ENCODE measurements at regions of chr11 and their contacts with region 1.

Region 1: DNA sequence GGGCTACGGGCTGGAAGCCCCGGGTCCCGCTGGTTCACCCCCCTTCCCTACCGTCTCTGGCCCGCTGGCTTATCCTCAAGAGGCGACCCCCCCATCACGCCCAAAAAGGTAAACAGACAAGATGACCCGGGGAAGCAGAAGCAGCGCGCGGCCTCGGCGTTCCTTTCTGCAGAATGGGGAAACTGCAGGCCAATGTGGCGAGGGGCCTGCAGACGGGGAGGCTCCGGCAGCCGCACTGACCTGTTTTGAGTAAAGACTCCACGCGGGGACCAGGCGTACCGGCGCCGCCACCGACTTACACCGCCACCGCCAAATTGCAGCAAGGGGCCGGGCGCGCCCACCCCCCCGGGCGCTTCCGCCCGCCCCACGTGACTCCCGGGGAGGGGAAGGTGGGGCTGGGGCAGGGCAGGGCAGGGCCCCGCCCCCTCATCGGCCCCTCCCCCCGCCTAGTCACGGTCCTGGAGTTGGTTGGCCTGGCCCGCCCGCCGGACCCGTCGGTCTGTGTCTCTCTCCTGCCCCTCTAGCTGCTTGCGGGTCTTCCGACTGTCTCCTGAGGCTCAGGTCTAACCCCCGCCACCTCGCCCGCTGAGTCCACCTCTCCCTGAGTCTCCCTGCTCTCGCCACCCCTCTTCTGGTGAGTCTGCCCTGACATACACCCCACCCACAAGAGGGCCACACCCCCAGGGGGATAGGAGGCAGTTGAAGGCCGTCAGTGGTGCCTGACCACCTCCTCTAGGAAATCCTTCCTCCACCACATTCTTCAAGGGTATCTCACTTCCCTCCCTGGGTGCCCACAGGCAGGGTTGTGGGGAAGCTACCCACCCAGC is at the start of gene ARAP1:
- DNase-seq: peak; percentile 80 to 82
- H3K4me3 ChIP-seq: peak within 1 kb of the TSS; percentile 96
- H3K27ac ChIP-seq: peak within 1 kb of the TSS; percentile 35; the same call in 1 of the 2 replicates
- H3K4me1 ChIP-seq: peaks cover 26% of the 10 kb centered on the region
- H3K27me3 ChIP-seq: no peaks in the 10 kb centered on the region
- CTCF ChIP-seq: no peak
- total RNA-seq, gene ARAP1: 151 and 184 TPM in 2 replicates

Region 2: GRCh38 chr11:72786393-72786866 is 34.1 kb after region 1 on chr11:
- CTCF ChIA-PET with region 1: no interaction called
- POLR2A ChIA-PET with region 1: interaction called, 24 read pairs
- intact Hi-C with region 1: no loop called
- DNase-seq: peak; percentile 75 to 99
- H3K4me3 ChIP-seq: no peak overlapping the region; the same call in 1 of the 2 replicates
- H3K27ac ChIP-seq: peak overlapping the region; percentile 80
- H3K4me1 ChIP-seq: peaks cover 80% of the 10 kb centered on the region
- H3K27me3 ChIP-seq: no peaks in the 10 kb centered on the region
- CTCF ChIP-seq: no peak

Region 3: DNA sequence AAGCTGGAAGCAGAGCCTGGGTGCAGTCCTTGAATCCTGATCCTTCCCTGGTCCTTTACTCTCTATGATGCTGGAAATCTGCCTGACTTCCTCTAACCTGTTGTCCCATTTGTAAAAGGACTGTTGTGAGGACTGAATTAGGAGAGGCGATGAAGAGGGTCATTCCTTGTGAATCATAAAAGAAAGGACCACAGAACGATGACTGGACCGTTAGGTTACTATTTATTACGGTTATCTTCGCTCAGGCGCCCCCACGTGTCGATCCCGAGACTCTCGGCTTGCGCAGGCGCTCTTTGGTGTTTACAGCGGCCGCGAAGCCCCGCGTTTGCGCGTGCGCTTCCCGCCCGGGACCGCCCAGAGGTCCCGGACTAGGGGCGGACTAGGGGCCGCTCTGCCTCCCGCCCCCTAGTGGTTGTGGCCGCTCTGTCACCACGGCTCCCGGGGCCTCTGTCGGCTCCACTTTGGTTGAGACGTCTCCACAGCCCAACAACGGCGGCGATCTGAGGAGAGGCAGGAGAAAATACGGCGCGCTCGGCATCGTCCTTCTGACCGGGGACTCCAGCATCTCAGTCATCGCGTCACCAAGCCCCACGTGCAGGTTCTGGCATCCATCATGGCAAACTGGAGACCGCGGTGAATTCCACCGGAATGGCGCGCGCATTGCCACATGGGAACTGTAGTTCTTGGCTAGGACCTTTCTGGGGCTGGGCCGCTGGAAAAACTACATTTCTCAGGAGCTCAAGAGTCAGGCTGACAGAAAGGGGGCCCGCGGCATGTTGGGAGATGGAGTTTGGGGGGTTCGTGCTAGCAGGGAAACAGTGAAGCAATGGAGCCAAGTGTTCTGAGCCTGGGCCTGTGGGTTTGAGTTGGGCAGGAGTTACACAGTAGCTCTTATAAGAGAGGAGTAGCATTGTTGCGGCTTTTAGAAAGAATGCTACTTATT is 41.4 kb after region 1 on chr11 and contains the start of gene STARD10:
- CTCF ChIA-PET with region 1: interaction called, 10 read pairs
- POLR2A ChIA-PET with region 1: interaction called, 4 read pairs
- intact Hi-C with region 1: no loop called
- DNase-seq: peak; percentile 85 to 96
- H3K4me3 ChIP-seq: peak within 1 kb of the TSS; percentile 70
- H3K27ac ChIP-seq: peak within 1 kb of the TSS; percentile 25
- H3K4me1 ChIP-seq: peaks cover 45% of the 10 kb centered on the region
- H3K27me3 ChIP-seq: no peaks in the 10 kb centered on the region
- CTCF ChIP-seq: peak; percentile 100
- total RNA-seq, gene STARD10: 145 and 184 TPM in 2 replicates

Region 4: DNA sequence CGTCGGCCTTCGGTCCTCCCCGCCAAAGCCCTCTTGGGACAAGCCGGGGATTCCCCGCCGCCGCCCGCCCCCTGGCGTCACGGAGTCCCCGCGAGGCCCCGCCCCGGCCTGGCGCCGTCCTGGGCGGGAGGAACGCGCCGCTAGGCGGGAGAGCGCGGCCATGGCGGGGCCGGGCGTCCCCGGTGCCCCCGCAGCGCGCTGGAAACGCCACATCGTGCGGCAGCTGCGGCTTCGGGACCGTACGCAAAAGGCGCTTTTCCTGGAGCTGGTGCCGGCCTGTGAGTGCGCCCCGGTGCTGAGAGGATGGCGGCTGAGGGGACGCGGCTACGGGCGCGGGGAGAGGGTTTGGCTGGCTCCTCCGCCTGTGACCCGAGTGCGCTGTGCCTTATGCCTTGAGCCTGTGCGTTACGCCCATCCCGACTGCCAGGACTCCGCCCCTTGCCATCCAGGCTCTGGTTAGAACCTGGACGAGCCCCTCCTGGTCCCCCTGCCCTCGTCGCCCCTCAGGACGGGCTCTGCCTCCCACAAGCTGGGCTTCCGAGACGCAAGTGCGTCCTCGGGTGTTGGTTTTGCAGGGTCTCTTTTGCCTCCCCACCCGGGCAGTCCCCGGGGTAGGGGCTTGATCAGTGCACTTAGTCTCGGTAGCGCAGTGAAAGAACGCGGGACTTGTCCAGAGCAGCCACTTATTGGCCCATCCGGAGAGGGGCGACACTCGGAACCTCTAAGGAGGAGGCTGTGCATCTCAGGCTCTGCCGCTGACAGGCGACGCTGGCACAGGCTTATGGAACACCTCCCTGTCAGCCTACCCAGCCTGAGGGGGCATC is 62.2 kb after region 1 on chr11 and contains the start of gene ATG16L2:
- CTCF ChIA-PET with region 1: no interaction called
- POLR2A ChIA-PET with region 1: no interaction called
- intact Hi-C with region 1: loop called (anchors 1 kb)
- DNase-seq: peak; percentile 76 to 93
- H3K4me3 ChIP-seq: peak within 1 kb of the TSS; percentile 85
- H3K27ac ChIP-seq: peak within 1 kb of the TSS; percentile 74
- H3K4me1 ChIP-seq: peaks cover 39% of the 10 kb centered on the region
- H3K27me3 ChIP-seq: no peaks in the 10 kb centered on the region
- CTCF ChIP-seq: no peak; the same call in 1 of the 2 replicates
- total RNA-seq, gene ATG16L2: 17.5 and 24.0 TPM in 2 replicates

Measured in PC-9 (cell line).